ENCODE measurements at regions of chr19 and their contacts with region 1.

Region 1: DNA sequence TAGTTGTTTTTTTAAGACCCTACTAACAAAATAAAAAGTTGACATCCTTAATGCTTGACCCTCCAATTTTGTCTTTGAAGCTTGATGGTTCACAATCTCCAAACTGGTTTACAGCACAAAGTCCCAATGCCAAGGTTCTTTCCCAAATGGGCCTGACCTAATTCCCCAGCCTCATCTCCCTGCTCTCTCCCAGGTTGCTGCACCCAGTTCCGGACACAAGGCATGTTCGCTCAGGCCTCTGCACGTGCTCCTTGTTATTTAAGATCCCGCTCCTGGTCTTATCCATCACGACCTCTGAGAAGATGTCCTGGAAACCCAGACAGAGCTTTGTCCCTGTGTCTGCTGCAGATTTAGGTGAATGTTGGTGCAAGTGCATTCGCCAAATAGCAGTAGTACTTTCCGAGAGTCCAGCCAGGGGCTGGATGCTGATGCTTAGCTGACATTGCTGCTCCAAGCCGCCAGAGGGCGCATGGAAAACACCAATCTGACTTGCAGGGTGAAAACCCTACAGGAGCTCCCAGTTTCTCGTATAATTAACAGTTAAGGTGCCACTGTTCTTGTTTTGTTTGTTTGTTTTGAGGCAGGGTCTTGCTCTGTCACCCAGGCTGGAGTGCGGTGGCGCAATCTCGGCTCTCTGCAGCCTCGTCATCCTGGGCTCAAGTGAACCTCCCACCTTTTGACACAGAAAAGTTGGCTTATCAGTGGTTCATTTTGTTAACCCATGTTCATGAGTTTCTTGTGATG is 18.5 kb downstream of the LYPD3 start:
- DNase-seq: peak; percentile 67 to 83 (median 79)
- H3K4me3 ChIP-seq: no peak overlapping the region
- H3K27ac ChIP-seq: no peak overlapping the region
- H3K4me1 ChIP-seq: peaks cover 0 to 8% (median 5%) of the 10 kb centered on the region in 4 experiments
- H3K27me3 ChIP-seq: no peaks in the 10 kb centered on the region

Region 2: GRCh38 chr19:43433358-43433673 is 13.6 kb before region 1 on chr19:
- CTCF ChIA-PET with region 1: interaction called, 25 read pairs
- POLR2A ChIA-PET with region 1: no interaction called
- DNase-seq: no peak
- H3K4me3 ChIP-seq: no peak overlapping the region
- H3K27ac ChIP-seq: no peak overlapping the region
- H3K4me1 ChIP-seq: peaks cover 1 to 4% (median 2%) of the 10 kb centered on the region in 4 experiments
- H3K27me3 ChIP-seq: no peaks in the 10 kb centered on the region

Region 3: GRCh38 chr19:43457809-43458208 is 10.9 kb after region 1 on chr19:
- CTCF ChIA-PET with region 1: interaction called, 15 read pairs
- POLR2A ChIA-PET with region 1: no interaction called
- DNase-seq: no peak
- H3K4me3 ChIP-seq: no peak overlapping the region
- H3K27ac ChIP-seq: no peak overlapping the region
- H3K4me1 ChIP-seq: peaks cover 7 to 12% (median 11%) of the 10 kb centered on the region in 4 experiments
- H3K27me3 ChIP-seq: peaks cover 0 to 1% (median 0%) of the 10 kb centered on the region in 5 experiments

Region 4: GRCh38 chr19:43489310-43489709 is 42.4 kb after region 1 on chr19:
- CTCF ChIA-PET with region 1: interaction called, 12 read pairs
- POLR2A ChIA-PET with region 1: no interaction called
- DNase-seq: peak in 2 of 3 donors; percentile 59 to 76
- H3K4me3 ChIP-seq: no peak overlapping the region
- H3K27ac ChIP-seq: no peak overlapping the region
- H3K4me1 ChIP-seq: peaks cover 5 to 32% (median 26%) of the 10 kb centered on the region in 4 experiments
- H3K27me3 ChIP-seq: no peaks in the 10 kb centered on the region

Region 5: GRCh38 chr19:43519436-43520088 is 72.6 kb after region 1 on chr19:
- CTCF ChIA-PET with region 1: interaction called, 304 read pairs
- POLR2A ChIA-PET with region 1: interaction called, 7 read pairs
- DNase-seq: peak; percentile 84 to 92 (median 86)
- H3K4me3 ChIP-seq: no peak overlapping the region
- H3K27ac ChIP-seq: no peak overlapping the region
- H3K4me1 ChIP-seq: peaks cover 0 to 20% (median 5%) of the 10 kb centered on the region in 4 experiments
- H3K27me3 ChIP-seq: no peaks in the 10 kb centered on the region

Region 6: GRCh38 chr19:43526884-43527859 is 80.3 kb after region 1 on chr19 and contains the start of gene ETHE1:
- CTCF ChIA-PET with region 1: interaction called, 304 read pairs
- POLR2A ChIA-PET with region 1: no interaction called
- DNase-seq: peak; percentile 34 to 70 (median 55)
- H3K4me3 ChIP-seq: peak within 1 kb of the TSS; percentile 81 to 96 (median 88)
- H3K27ac ChIP-seq: peak within 1 kb of the TSS in 1 of 2 experiments; percentile 74
- H3K4me1 ChIP-seq: peaks cover 0 to 41% (median 33%) of the 10 kb centered on the region in 4 experiments
- H3K27me3 ChIP-seq: no peaks in the 10 kb centered on the region